HCT116 (cell line): ENCODE measurements at regions of chr5 and their contacts with region 1.

Region 1: DNA sequence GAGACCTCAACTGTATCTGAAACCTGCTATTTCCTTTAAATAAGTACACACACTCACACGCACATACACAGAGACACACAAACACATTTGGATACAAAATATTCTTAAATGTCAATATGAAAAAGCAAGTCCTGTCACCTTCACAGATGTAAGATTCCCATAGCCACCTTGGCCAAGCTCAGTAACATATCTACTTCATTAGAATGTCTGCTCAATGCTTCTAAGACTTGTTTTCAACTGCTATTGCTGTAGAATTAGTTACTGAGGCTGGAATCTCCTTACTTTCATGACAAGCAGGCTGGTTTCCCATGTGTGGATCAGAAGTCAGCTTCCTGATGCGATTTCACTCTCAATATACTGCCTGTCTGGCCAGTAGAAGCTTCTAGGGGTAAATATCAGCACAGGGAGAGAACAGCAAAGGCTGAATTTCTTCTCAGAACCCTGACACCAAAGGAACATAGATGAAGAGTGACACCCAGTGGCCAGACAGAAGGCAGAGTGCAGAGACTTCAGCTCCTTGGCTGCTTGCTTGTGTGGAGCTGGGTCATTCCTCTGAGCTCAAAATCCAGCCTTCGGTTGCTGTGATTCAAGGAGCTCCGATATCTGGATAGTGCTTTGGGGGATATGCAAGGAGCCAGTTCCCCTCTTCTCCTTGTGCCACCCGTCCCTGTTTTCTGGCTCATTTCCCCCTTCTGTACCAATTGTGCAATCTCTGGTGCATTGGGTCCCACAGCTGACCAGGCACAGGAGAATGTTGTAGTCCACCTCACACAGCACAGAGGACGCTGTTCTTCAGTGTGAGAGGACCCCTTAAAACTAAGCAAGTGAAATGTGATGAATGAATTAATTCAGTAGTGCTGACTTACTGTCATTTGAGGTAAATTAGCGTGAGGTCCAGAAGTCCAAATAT is 26.6 kb upstream of the ABLIM3 start:
- DNase-seq: peak; percentile 77
- ATAC-seq: peak; percentile 98
- H3K4me3 ChIP-seq: no peak overlapping the region
- H3K27ac ChIP-seq: no peak overlapping the region
- H3K4me1 ChIP-seq: peaks cover 10 to 32% of the 10 kb centered on the region in 2 experiments; a peak in 3 of 4 replicates
- H3K27me3 ChIP-seq: no peaks in the 10 kb centered on the region
- CTCF ChIP-seq: peak; percentile 81 to 89 (median 82)
- POLR2A ChIP-seq: no peak
- RAD21 ChIP-seq: peak; percentile 97

Region 2: DNA sequence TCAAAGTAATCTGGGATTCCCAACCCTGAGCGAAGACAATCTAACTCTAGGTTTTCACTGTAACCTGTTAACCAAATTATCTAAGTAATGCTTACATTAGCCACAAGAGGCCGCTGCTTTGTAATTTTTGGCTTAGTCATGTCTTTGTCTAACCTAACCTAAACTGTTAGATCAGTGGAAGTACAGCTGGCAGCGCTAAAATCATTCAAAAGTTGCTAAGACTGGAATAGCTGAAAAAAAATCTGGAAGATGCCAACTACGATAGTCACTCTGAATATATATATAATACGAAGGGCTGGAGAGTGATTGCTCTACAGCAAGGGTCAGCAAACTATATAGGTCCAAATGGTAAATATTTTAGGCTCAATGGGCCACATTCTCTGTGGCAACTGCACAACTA is 670.7 kb before region 1 on chr5:
- CTCF ChIA-PET with region 1: interaction called, 7 read pairs
- POLR2A ChIA-PET with region 1: no interaction called
- RAD21 ChIA-PET with region 1: no interaction called
- intact Hi-C with region 1: loop called (anchors 5 kb)
- DNase-seq: peak; percentile 45
- ATAC-seq: peak; percentile 86
- H3K4me3 ChIP-seq: no peak overlapping the region
- H3K27ac ChIP-seq: no peak overlapping the region
- H3K4me1 ChIP-seq: no peaks in the 10 kb centered on the region
- H3K27me3 ChIP-seq: peaks cover 5% of the 10 kb centered on the region
- CTCF ChIP-seq: peak; percentile 52 to 82 (median 78)
- POLR2A ChIP-seq: no peak
- RAD21 ChIP-seq: peak; percentile 77

Region 3: DNA sequence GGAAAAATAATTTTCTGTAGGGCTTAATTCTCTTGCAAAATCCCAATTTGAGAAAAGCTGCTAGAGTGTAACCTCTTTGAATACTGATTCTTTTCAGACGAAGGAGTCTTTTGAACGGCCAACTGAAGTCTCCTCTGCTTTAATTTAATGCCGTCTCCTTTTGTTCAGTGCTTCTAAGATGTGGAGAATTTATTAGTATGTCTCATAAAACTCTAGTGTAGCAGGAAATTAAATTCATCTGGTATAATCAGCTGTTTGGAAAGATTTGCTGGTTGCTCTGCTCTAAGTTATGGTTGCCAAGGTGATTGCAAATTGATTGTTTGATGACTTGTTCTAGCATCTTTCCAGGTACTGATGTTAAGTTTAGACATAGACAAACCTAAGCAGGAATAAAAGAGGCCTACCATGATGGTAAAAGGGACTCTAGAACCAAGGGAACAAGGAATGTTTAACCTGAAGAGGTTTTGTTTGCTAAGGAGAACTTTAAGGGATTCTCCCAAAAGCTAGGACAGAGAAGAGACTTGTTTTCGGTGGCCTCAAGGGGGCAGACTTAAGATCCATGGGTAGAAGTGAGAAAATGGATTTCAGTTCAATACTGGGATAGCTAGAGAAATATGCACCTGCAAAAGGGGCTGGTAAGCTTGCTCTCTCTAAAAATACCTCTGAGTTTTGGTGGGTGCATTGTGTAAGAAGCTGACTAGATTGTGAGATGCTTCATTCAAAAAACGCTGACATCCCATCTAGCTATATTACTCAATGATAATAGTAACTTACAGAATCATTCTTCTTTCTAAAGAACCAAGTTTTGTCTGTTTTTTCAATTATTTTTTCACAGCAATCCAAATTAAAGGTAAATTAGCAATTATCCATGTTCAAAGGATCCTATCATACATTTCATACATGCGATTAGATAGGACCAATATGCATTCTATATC is 293.9 kb before region 1 on chr5:
- CTCF ChIA-PET with region 1: interaction called, 17 read pairs
- POLR2A ChIA-PET with region 1: no interaction called
- RAD21 ChIA-PET with region 1: interaction called in 1 of 2 experiments, 4 read pairs
- intact Hi-C with region 1: no loop called
- DNase-seq: peak; percentile 31
- ATAC-seq: peak; percentile 83
- H3K4me3 ChIP-seq: no peak overlapping the region
- H3K27ac ChIP-seq: no peak overlapping the region
- H3K4me1 ChIP-seq: peaks cover 5 to 6% of the 10 kb centered on the region in 2 experiments; a peak in 2 of 4 replicates
- H3K27me3 ChIP-seq: no peaks in the 10 kb centered on the region
- CTCF ChIP-seq: peak; percentile 60 to 78 (median 78); a peak in 5 of 6 replicates
- POLR2A ChIP-seq: no peak
- RAD21 ChIP-seq: peak; percentile 49

Region 4: GRCh38 chr5:148957591-148958202 is 157.0 kb before region 1 on chr5:
- CTCF ChIA-PET with region 1: interaction called, 46 read pairs
- POLR2A ChIA-PET with region 1: no interaction called
- RAD21 ChIA-PET with region 1: interaction called in 1 of 2 experiments, 6 read pairs
- intact Hi-C with region 1: no loop called
- DNase-seq: no peak
- ATAC-seq: peak; percentile 76
- H3K4me3 ChIP-seq: no peak overlapping the region
- H3K27ac ChIP-seq: no peak overlapping the region
- H3K4me1 ChIP-seq: peaks cover 0 to 7% of the 10 kb centered on the region in 2 experiments; a peak in 1 of 4 replicates
- H3K27me3 ChIP-seq: no peaks in the 10 kb centered on the region
- CTCF ChIP-seq: peak; percentile 84 to 97 (median 90)
- POLR2A ChIP-seq: no peak
- RAD21 ChIP-seq: peak; percentile 83

Region 5: DNA sequence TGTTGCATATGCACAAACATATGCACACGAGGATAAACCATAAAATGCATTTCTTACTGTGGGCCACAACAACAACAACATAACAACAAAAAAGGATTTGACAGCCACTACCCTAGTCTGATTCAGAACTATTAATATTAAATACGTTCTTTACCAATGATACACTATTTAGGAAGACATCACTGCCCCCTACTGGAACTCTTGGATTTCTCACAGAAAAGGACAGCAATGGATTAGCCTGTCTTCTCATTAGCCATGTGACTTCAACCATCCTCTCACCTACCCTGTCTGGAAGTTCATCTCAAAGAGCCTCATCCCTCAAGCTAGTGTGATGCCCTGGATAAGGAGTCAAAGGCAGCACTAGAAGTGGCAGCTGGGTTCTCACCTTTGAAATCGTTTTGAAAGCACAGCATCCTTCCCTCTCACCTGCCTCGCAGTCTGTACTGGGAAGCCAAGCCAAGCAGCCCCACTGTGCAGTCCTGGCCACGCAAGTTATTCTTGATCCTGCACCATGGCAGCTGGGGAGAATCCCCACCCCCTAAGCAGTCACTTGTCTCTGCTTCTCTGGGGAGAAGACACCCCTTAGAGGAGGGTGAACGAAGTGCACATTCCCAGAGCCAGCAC is 116.4 kb before region 1 on chr5:
- CTCF ChIA-PET with region 1: interaction called, 11 read pairs
- POLR2A ChIA-PET with region 1: no interaction called
- RAD21 ChIA-PET with region 1: interaction called in 1 of 2 experiments, 6 read pairs
- intact Hi-C with region 1: loop called (anchors 10 kb)
- DNase-seq: peak; percentile 63
- ATAC-seq: peak; percentile 82
- H3K4me3 ChIP-seq: no peak overlapping the region
- H3K27ac ChIP-seq: no peak overlapping the region
- H3K4me1 ChIP-seq: peaks cover 8 to 20% of the 10 kb centered on the region in 2 experiments
- H3K27me3 ChIP-seq: no peaks in the 10 kb centered on the region
- CTCF ChIP-seq: peak; percentile 63 to 81 (median 80)
- POLR2A ChIP-seq: no peak
- RAD21 ChIP-seq: peak; percentile 91

Region 6: DNA sequence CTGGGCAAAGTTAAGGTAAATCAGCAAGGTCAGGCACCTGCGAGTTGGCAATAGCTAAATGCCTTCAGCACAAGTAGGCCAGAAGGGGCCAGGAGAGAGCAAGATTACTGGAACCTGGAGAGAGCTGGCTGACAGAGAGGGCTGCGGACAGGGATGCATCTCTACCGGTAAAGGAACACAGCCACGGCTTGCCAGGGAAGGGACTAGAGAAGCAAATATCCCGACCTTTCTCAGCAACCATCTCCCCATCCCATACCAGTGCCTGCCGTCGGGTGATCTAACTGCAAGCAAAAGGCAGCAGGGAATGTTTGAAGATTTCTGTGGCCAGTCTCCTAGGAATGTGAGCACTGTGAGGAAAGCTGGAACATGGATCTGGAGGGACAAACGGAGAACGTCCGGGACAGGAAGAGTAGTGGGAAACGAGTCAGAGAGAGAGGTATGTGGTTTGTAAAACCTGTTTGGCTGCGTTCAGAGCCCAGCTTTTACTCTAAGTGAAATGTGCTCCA is 10.8 kb after region 1 on chr5:
- CTCF ChIA-PET with region 1: interaction called, 18 read pairs
- POLR2A ChIA-PET with region 1: interaction called, 4 read pairs
- RAD21 ChIA-PET with region 1: interaction called in 1 of 2 experiments, 3 read pairs
- intact Hi-C with region 1: no loop called
- DNase-seq: no peak
- ATAC-seq: peak; percentile 74
- H3K4me3 ChIP-seq: peak overlapping the region in 1 of 2 experiments; percentile 23; a peak in 1 of 4 replicates
- H3K27ac ChIP-seq: no peak overlapping the region
- H3K4me1 ChIP-seq: peaks cover 0 to 26% of the 10 kb centered on the region in 2 experiments; a peak in 2 of 4 replicates
- H3K27me3 ChIP-seq: no peaks in the 10 kb centered on the region
- CTCF ChIP-seq: peak; percentile 34 to 46 (median 43); a peak in 4 of 6 replicates
- POLR2A ChIP-seq: no peak
- RAD21 ChIP-seq: peak; percentile 50

Region 7: GRCh38 chr5:149157330-149157729 is 42.7 kb after region 1 on chr5:
- CTCF ChIA-PET with region 1: no interaction called
- POLR2A ChIA-PET with region 1: no interaction called
- RAD21 ChIA-PET with region 1: no interaction called
- intact Hi-C with region 1: no loop called
- DNase-seq: no peak
- ATAC-seq: no peak
- H3K4me3 ChIP-seq: no peak overlapping the region
- H3K27ac ChIP-seq: no peak overlapping the region
- H3K4me1 ChIP-seq: peaks cover 5 to 36% of the 10 kb centered on the region in 2 experiments; a peak in 3 of 4 replicates
- H3K27me3 ChIP-seq: no peaks in the 10 kb centered on the region
- CTCF ChIP-seq: no peak
- POLR2A ChIP-seq: no peak
- RAD21 ChIP-seq: no peak